Caco-2 (cell line): ENCODE measurements at regions of chr2 and their contacts with region 1.

Region 1: GRCh38 chr2:79855264-79856006 is 342.6 kb downstream of the CTNNA2 start:
- DNase-seq: peak in 1 of 2 experiments; percentile 43
- H3K4me3 ChIP-seq: no peak overlapping the region
- H3K4me3 Mint-ChIP-seq: no peak overlapping the region
- H3K27ac Mint-ChIP-seq: no peak overlapping the region
- H3K4me1 ChIP-seq: no peaks in the 10 kb centered on the region
- H3K4me1 Mint-ChIP-seq: no peaks in the 10 kb centered on the region
- H3K27me3 ChIP-seq: no peaks in the 10 kb centered on the region
- H3K27me3 Mint-ChIP-seq: peaks cover 14% of the 10 kb centered on the region
- CTCF ChIP-seq: peak; percentile 34 to 60

Region 2: DNA sequence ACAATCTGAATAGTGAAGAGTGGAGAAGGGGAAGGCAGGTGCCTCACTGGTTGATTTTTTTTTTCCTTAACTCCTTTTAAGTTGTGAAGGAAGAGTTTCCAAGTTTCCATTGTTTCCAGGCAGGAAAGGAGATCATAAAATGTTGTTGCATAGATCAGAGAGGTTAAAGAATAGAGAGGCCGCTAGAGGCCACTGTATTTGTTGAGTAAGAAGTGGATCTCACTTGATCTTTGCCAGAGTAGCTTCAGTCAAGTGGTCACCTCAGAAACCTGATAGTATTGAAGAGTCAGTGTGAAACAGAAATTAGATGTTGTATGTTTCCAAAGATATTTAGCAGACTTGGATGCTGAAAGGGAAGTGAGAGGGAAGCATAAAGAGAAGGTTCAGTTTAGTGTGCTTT is 325.0 kb before region 1 on chr2:
- CTCF ChIA-PET with region 1: no interaction called
- POLR2A ChIA-PET with region 1: no interaction called
- intact Hi-C with region 1: loop called (anchors 1 kb)
- DNase-seq: peak in 1 of 2 experiments; percentile 10
- H3K4me3 ChIP-seq: no peak overlapping the region
- H3K4me3 Mint-ChIP-seq: no peak overlapping the region
- H3K27ac Mint-ChIP-seq: no peak overlapping the region
- H3K4me1 ChIP-seq: no peaks in the 10 kb centered on the region
- H3K4me1 Mint-ChIP-seq: no peaks in the 10 kb centered on the region
- H3K27me3 ChIP-seq: no peaks in the 10 kb centered on the region
- H3K27me3 Mint-ChIP-seq: peaks cover 4% of the 10 kb centered on the region
- CTCF ChIP-seq: peak in 1 of 2 experiments; percentile 28

Region 3: GRCh38 chr2:79670198-79670597 is 185.2 kb before region 1 on chr2:
- CTCF ChIA-PET with region 1: interaction called, 3 read pairs
- POLR2A ChIA-PET with region 1: no interaction called
- intact Hi-C with region 1: loop called (anchors 1 kb)
- DNase-seq: peak; percentile 54 to 56
- H3K4me3 ChIP-seq: no peak overlapping the region
- H3K4me3 Mint-ChIP-seq: no peak overlapping the region
- H3K27ac Mint-ChIP-seq: no peak overlapping the region
- H3K4me1 ChIP-seq: no peaks in the 10 kb centered on the region
- H3K4me1 Mint-ChIP-seq: no peaks in the 10 kb centered on the region
- H3K27me3 ChIP-seq: no peaks in the 10 kb centered on the region
- H3K27me3 Mint-ChIP-seq: peaks cover 3% of the 10 kb centered on the region
- CTCF ChIP-seq: peak in 1 of 2 experiments; percentile 26

Region 4: GRCh38 chr2:79832511-79833234 is 22.8 kb before region 1 on chr2:
- CTCF ChIA-PET with region 1: no interaction called
- POLR2A ChIA-PET with region 1: no interaction called
- intact Hi-C with region 1: no loop called
- DNase-seq: no peak
- H3K4me3 ChIP-seq: no peak overlapping the region
- H3K4me3 Mint-ChIP-seq: no peak overlapping the region
- H3K27ac Mint-ChIP-seq: no peak overlapping the region
- H3K4me1 ChIP-seq: no peaks in the 10 kb centered on the region
- H3K4me1 Mint-ChIP-seq: no peaks in the 10 kb centered on the region
- H3K27me3 ChIP-seq: no peaks in the 10 kb centered on the region
- H3K27me3 Mint-ChIP-seq: peaks cover 4% of the 10 kb centered on the region
- CTCF ChIP-seq: no peak